Activated CD4-positive, alpha-beta memory T cell treated with anti-CD3 and anti-CD28 coated beads, Interleukin-2, amount 10 ng/mL, durations not matched to agents 7 days and 5 days (primary cell): ENCODE measurements at regions of chr14 and their contacts with region 1.

Region 1: DNA sequence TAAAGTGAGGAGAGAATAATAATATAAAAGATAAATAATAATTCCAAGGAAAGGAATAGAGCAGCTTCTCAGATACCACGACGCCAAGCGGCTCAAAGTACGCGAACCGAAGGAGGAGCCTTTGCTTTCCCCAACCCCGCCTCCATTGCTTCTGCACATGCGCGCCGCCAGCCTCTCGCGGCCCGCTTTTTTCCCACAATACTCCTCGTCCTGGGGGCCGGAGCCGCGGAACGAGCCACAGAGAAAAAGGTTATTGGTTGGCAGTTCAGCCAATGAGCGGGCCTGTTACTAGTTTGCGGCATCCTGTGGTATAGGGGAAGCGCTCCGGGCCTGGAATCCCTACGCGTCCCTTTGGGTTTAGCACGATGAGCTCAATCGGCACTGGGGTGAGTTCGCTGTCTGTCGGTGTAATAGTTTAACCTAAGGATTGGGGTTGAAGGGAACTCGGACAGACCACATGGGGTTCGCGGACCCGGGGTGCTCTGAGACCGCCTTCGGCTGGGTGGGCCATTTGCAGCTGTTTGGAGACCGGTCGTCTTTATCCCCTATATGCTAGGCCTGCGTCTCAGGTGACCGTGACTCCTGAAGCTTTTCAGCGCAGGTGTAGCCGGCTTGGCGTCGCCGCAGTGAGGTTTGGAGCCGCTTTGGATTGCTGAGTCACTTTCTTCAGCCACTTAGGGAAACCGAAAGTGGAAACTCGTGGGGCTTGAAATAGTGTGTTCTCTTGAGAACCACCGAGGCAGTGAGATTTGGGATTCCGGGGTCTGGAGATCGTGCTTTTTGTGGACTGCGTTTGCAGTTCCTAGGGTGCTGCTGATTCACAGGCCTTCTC is at the start of gene PSMA3:
- DNase-seq: peak; percentile 98
- H3K4me3 Mint-ChIP-seq: peak within 1 kb of the TSS; percentile 88
- H3K27ac Mint-ChIP-seq: peak within 1 kb of the TSS; percentile 96
- H3K4me1 Mint-ChIP-seq: peaks cover 49% of the 10 kb centered on the region
- H3K27me3 Mint-ChIP-seq: no peaks in the 10 kb centered on the region
- total RNA-seq, gene PSMA3: 243 to 259 TPM

Region 2: GRCh38 chr14:58199726-58200479 is 44.9 kb before region 1 on chr14 and contains the start of gene ACTR10:
- CTCF ChIA-PET with region 1: no interaction called
- POLR2A ChIA-PET with region 1: interaction called, 16 read pairs
- DNase-seq: peak; percentile 86
- H3K4me3 Mint-ChIP-seq: peak within 1 kb of the TSS; percentile 95
- H3K27ac Mint-ChIP-seq: peak within 1 kb of the TSS; percentile 92
- H3K4me1 Mint-ChIP-seq: peaks cover 38% of the 10 kb centered on the region
- H3K27me3 Mint-ChIP-seq: no peaks in the 10 kb centered on the region
- total RNA-seq, gene ACTR10: 42.3 to 49.2 TPM

Region 3: DNA sequence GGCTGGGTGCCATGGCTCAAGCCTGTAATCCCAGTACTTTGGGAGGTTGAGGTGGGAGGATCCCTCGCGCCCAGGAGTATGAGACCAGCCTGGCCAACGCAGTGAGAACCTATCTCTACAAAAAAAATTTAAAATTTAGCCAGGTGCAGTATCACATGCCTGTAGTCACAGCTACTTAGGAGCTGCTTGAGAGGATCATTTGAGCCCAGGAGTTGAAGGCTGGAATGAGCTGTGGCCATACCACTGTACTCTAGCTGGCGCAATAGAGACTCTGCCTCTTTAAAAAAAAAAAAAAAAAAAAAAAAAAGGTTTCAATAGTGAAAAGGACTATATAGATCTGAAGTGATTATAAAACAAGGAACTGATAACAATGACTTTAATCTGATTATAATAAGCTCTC is 13.4 kb after region 1 on chr14:
- CTCF ChIA-PET with region 1: interaction called, 6 read pairs
- POLR2A ChIA-PET with region 1: interaction called, 21 read pairs
- DNase-seq: no peak
- H3K4me3 Mint-ChIP-seq: no peak overlapping the region
- H3K27ac Mint-ChIP-seq: no peak overlapping the region
- H3K4me1 Mint-ChIP-seq: peaks cover 19% of the 10 kb centered on the region
- H3K27me3 Mint-ChIP-seq: no peaks in the 10 kb centered on the region

Region 4: GRCh38 chr14:58265401-58265800 is 20.6 kb after region 1 on chr14:
- CTCF ChIA-PET with region 1: no interaction called
- POLR2A ChIA-PET with region 1: interaction called, 21 read pairs
- DNase-seq: no peak
- H3K4me3 Mint-ChIP-seq: no peak overlapping the region
- H3K27ac Mint-ChIP-seq: no peak overlapping the region
- H3K4me1 Mint-ChIP-seq: peaks cover 5% of the 10 kb centered on the region
- H3K27me3 Mint-ChIP-seq: no peaks in the 10 kb centered on the region

Region 5: DNA sequence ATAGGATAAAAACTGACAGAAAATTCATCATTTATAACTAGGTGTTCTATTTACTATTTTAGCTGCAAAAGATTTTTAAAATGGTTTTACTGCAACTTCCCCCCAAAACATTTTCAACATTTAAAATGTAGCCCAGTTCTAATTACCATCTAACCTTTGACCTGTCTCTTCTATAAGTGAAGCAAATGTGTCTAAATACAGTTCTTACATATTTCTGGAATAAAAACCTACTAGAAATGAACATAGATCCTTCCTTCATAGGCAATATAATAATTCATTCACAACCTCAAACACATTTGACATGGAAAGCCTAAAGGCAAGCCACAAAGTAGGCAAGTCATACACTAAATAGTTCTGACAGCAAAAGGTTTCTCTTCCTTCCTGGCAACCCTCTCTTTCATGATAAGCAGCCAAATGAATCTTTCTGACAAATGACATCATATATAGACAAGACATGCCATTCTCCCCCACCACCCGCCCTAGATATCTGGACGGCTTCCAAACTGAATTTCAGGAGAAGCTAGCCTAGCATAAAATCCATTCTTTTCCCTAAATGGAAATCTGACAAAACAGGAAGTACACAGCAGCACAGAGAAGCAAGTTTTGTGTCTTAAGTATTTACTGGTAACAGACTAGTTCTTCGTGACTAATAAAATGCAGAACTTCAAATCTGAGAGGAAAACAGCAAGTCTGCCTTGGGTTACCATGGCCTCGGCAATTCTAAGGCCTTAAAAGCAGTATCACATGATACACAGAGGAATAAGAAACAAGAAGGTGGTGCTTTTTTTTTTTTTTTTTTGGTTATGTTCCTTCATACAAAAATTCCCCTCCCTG is 36.4 kb after region 1 on chr14:
- CTCF ChIA-PET with region 1: no interaction called
- POLR2A ChIA-PET with region 1: interaction called, 13 read pairs
- DNase-seq: peak; percentile 28
- H3K4me3 Mint-ChIP-seq: peak overlapping the region; percentile 47
- H3K27ac Mint-ChIP-seq: peak overlapping the region; percentile 92
- H3K4me1 Mint-ChIP-seq: peaks cover 60% of the 10 kb centered on the region
- H3K27me3 Mint-ChIP-seq: no peaks in the 10 kb centered on the region

Region 6: DNA sequence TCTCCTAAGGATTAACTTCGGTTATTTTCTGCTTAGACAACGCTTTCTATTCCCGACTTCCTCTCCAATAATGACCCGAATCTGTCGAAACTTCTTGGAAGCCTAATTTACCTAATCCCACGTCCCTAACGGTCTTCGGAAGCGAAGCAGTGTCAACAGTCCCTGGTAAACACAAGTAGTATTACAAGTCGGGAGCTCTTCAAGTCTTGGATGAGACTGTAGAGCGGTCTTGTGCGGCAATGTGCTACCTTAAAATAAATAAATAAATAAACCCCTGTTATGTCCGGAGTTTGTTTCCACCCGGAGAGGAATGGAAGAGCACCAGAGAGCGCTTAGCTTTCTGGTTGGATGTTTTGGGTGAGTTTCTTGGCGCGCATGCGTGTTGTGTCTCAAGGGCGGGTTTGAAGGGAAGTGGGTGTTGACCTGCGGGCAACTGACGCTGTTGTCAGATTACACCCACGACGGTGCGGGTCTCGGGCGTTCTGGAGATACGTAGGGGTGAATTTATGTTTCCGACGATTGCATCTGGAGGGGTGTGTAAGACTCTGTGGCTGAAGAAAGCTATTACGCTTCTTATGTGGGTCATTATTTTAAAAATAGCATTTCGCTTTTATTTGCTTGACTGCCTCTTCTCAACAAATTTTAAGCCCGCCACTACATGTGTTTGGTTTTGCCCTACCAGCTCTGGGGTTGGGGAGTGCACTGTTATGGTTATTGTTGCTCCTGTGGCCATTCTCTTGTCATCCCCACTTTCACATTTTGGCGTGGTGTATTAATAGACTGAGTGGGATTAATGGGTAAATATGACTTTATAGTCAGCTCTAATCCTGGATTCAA is 182.7 kb after region 1 on chr14 and contains the starts of genes KIAA0586 and TIMM9:
- CTCF ChIA-PET with region 1: interaction called, 3 read pairs
- POLR2A ChIA-PET with region 1: interaction called, 20 read pairs
- DNase-seq: peak; percentile 97
- H3K4me3 Mint-ChIP-seq: peak within 1 kb of the TSS; percentile 93
- H3K27ac Mint-ChIP-seq: peak within 1 kb of the TSS; percentile 97
- H3K4me1 Mint-ChIP-seq: peaks cover 46% of the 10 kb centered on the region
- H3K27me3 Mint-ChIP-seq: no peaks in the 10 kb centered on the region
- total RNA-seq, gene KIAA0586: 31.7 to 34.6 TPM
- total RNA-seq, gene TIMM9: 37.5 to 40.3 TPM

Region 7: DNA sequence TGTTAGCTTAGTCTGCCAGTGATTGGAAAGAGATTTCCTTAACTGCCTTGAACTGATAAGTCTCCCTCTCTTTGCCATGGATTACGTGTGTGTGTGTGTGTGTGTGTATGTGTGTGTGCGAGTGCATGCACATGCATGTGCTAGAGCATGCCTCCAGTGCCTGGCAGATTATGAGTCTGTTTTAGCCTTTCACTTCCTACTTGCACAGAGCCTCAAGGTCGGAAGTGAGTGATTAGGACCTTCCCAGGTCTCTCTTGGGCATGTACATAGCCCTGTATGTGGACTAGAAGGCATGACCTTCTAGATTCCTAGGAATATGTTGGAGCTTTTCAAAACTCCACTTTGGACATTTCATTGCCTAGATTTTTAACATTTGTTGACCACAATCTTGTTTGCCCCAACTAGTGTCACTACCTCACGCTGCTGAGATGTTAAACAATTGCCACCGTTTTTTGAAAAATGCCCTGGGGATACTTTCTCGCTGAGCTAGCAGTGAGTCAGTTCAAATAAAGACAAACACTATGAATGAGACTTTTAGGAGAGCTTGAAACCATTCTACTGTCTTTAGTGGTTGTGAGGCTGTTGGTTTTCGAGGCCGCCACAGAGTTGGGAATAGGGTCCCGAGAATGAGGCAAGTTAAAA is 210.9 kb after region 1 on chr14:
- CTCF ChIA-PET with region 1: no interaction called
- POLR2A ChIA-PET with region 1: no interaction called
- DNase-seq: no peak
- H3K4me3 Mint-ChIP-seq: no peak overlapping the region
- H3K27ac Mint-ChIP-seq: no peak overlapping the region
- H3K4me1 Mint-ChIP-seq: peaks cover 3% of the 10 kb centered on the region
- H3K27me3 Mint-ChIP-seq: no peaks in the 10 kb centered on the region